Endothelial cell of umbilical vein (primary cell): ENCODE measurements at regions of chr18 and their contacts with region 1.

Region 1: GRCh38 chr18:12934454-12935071 is 13.2 kb upstream of the SEH1L start:
- DNase-seq: peak; percentile 80
- H3K4me3 ChIP-seq: no peak overlapping the region
- H3K27ac ChIP-seq: no peak overlapping the region
- H3K4me1 ChIP-seq: no peaks in the 10 kb centered on the region
- H3K27me3 ChIP-seq: peaks cover 4 to 5% of the 10 kb centered on the region in 2 experiments
- CTCF ChIP-seq: peak; percentile 84 to 92
- POLR2A ChIP-seq: no peak

Region 2: DNA sequence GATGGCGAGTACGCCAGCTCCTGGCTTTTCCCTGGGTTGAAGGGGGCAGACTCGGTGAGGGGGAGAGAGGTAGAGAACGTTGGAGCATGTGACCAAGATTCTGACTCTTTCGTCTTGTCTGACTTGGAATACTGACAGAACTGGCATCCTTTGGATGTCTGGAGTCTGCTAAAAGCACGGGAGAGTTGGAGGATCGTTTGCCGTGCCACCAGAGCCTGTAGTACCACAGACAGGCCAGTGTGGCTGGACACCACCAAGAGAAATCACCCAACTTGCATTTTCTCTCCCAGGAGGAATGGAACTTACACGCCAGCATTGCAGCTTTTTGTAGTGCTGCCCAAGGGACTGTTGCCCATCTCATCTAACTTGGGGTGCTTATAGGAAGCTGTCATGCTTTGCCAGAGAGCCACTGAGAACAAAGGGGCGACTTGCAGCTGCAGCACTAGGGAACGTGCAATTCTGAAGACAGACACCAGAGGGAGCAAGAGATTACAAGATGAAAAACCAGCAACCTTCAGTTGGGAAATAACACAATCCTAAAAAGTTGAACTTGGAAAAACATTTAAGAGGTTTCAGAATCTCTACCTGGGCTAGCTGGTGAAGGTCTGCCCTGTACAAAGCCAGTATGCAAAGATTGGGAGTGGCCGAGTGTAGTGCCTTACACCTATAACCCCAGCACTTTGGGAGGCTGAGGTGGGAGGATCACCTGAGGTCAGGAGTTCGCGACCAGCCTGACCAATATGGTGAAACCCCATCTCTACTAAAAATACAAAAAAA is 207.6 kb before region 1 on chr18:
- CTCF ChIA-PET with region 1: interaction called, 124 read pairs
- POLR2A ChIA-PET with region 1: interaction called, 3 read pairs
- dilution Hi-C with region 1: no loop called
- intact Hi-C with region 1: loop called (anchors 1 kb)
- DNase-seq: peak; percentile 81
- H3K4me3 ChIP-seq: no peak overlapping the region
- H3K27ac ChIP-seq: no peak overlapping the region
- H3K4me1 ChIP-seq: no peaks in the 10 kb centered on the region
- H3K27me3 ChIP-seq: no peaks in the 10 kb centered on the region
- CTCF ChIP-seq: peak; percentile 76 to 80
- POLR2A ChIP-seq: no peak

Region 3: DNA sequence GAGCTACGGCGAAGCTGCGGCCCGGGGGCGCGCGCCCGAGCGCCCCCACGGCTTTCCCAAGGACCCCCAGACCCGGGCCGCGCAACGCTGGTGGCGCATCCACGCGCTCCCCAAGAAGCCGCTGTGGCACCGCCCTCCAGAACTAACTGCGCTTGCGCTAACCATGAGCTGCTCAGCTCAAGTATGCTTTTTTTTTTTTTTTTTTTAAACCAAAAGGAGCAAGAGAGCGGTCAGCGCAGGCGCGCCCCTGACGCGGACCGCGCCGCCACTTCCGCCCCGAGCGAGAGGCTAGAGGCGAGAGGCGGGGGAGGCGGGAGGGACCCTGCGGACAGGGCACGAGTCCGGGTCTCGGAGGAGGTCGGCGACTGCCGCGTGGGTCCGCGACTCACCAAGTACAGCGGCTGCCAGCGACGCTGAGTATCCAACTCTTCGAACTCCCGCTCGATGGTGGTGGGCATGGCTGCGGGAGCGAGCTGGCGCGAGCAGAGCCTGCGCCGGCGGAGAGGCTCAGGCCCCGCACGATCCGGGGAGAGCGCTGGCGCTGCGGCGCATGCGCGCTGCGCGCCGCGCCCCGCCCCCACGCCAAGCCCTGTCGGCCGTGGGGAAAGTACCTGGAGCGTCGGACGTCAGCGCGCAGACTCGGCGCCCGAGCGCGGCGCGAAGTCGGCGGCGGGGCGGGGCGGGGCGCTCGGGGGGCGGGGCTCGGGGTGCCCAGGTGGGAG is 50.7 kb before region 1 on chr18 and contains the start of gene PTPN2:
- CTCF ChIA-PET with region 1: interaction called, 25 read pairs
- POLR2A ChIA-PET with region 1: no interaction called
- dilution Hi-C with region 1: no loop called
- intact Hi-C with region 1: no loop called
- DNase-seq: peak; percentile 95
- H3K4me3 ChIP-seq: peak within 1 kb of the TSS; percentile 72 to 92 (median 74)
- H3K27ac ChIP-seq: peak within 1 kb of the TSS; percentile 97
- H3K4me1 ChIP-seq: peaks cover 6% of the 10 kb centered on the region
- H3K27me3 ChIP-seq: no peaks in the 10 kb centered on the region
- CTCF ChIP-seq: no peak
- POLR2A ChIP-seq: peak; percentile 96
- total RNA-seq, gene PTPN2: 20.9 and 21.7 TPM in 2 replicates

Region 4: DNA sequence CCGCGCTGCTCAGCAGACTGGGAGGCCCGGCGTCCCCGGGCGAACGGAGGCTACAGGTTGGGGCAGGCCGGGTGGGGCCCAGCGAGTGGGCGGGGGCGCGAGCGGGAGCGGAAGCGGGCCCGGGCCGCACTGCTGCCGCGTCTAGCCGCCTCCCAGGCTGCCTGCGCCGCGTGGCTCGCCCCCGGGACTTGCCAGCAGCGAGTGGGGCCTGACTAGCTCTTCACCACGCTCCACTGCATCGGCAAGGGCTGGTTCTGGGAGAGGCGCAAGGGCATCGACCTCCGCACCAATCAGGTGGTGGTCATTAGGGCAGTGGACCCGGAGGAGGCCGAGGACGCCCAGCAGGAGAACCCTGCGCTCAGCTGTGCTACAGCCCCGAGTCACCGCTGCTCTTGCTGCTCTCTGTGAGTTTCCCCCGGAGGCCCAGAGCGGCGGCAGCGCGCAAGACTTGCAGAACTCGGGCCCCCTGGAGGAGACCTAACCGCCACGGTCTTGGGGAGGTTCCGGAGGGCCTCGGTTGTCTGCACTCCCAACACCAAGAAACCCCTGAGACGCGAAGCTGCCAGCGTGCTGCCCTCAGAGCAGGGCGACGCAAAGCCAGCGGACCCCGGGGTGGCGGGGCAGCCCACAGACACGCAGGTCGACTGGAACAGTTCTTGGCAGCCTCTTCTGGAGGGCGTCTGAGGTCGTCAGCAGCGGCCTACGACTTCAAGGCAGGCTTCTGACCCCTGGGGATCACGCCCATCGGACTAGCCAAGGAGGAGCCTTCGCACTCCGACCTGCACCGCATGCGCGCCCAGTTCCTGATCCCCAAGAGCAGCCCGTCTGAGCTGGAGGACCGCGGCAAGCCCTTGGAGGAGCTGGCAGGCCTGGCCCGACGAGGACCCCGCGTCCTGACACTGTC is 23.3 kb before region 1 on chr18:
- CTCF ChIA-PET with region 1: interaction called, 10 read pairs
- POLR2A ChIA-PET with region 1: no interaction called
- dilution Hi-C with region 1: no loop called
- intact Hi-C with region 1: no loop called
- DNase-seq: peak; percentile 17
- H3K4me3 ChIP-seq: peak overlapping the region in 1 of 3 experiments; percentile 6
- H3K27ac ChIP-seq: no peak overlapping the region
- H3K4me1 ChIP-seq: peaks cover 17% of the 10 kb centered on the region
- H3K27me3 ChIP-seq: peaks cover 16 to 39% of the 10 kb centered on the region in 2 experiments
- CTCF ChIP-seq: no peak
- POLR2A ChIP-seq: no peak

Region 5: DNA sequence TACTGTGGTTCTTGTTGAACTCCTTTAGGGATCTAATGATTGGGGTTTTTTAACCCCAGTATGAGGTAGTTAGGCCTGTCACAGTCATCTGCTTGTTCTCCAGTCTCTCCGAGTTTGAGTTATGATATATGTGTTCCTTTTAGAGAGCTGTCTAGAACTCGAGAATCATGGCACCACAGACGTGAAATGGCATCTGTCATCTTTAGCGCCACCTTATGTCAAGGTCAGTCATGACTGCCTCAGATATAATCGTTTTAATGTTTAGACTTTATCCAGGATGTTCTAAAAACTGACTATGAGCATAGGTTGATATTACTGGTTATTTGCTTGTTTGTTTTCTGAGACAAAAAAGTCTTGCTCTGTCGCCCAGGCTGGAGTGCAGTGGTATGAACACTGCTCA is 168.8 kb after region 1 on chr18:
- CTCF ChIA-PET with region 1: no interaction called
- POLR2A ChIA-PET with region 1: no interaction called
- dilution Hi-C with region 1: no loop called
- intact Hi-C with region 1: no loop called
- DNase-seq: no peak
- H3K4me3 ChIP-seq: no peak overlapping the region
- H3K27ac ChIP-seq: no peak overlapping the region
- H3K4me1 ChIP-seq: no peaks in the 10 kb centered on the region
- H3K27me3 ChIP-seq: no peaks in the 10 kb centered on the region
- CTCF ChIP-seq: no peak
- POLR2A ChIP-seq: no peak

Region 6: GRCh38 chr18:13629841-13630715 is 695.5 kb after region 1 on chr18:
- CTCF ChIA-PET with region 1: interaction called, 3 read pairs
- POLR2A ChIA-PET with region 1: no interaction called
- dilution Hi-C with region 1: no loop called
- intact Hi-C with region 1: loop called (anchors 1 kb)
- DNase-seq: peak; percentile 67
- H3K4me3 ChIP-seq: no peak overlapping the region
- H3K27ac ChIP-seq: no peak overlapping the region
- H3K4me1 ChIP-seq: no peaks in the 10 kb centered on the region
- H3K27me3 ChIP-seq: no peaks in the 10 kb centered on the region
- CTCF ChIP-seq: peak; percentile 63 to 68
- POLR2A ChIP-seq: no peak